ENCODE measurements at regions of chr9 and their contacts with region 1.

Region 1: DNA sequence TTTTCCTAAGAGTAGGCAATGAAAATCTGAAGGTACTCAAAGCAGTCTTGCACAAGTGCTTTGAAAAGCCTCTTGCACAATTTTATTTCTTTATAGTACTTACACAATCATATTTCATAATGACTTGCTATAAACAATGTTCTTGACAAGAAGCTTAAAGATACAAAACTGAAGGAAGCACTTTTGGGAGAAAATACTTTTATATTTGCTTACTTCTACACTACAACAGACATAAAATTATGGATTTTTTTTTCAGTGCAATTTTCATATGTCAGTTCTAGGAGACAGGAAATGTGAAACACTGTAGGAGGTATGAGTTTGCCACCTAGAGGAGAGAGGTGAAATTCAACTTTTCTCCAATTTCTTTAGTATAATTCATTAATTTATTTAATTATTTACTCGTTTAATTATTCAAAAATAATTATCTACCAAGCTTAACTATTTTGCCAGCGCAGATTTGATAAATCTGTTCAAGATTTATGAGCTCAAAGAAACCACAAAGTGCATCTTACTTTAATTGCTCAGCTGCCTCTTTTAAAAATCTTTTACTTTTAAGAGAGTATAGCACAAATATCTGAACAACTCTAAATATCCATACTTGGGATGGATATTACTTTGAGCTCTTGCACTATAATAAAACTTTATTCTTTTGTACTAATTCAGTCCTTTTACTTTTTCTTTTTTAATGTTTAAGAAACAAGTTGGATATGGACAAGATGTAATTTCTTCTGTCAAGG is 29.0 kb upstream of the CDKN2B start:
- DNase-seq: peak in 5 of 9 donors; percentile 7 to 39 (median 18)
- ATAC-seq: peak; percentile 63
- H3K4me3 ChIP-seq: no peak overlapping the region
- H3K4me3 Mint-ChIP-seq: no peak overlapping the region
- H3K27ac ChIP-seq: no peak overlapping the region
- H3K27ac Mint-ChIP-seq: no peak overlapping the region
- H3K4me1 ChIP-seq: peaks cover 0 to 5% of the 10 kb centered on the region in 2 donors
- H3K4me1 Mint-ChIP-seq: peaks cover 0 to 42% (median 4%) of the 10 kb centered on the region in 7 donors
- H3K27me3 ChIP-seq: no peaks in the 10 kb centered on the region
- H3K27me3 Mint-ChIP-seq: peaks cover 0 to 42% (median 0%) of the 10 kb centered on the region in 5 donors

Region 2: DNA sequence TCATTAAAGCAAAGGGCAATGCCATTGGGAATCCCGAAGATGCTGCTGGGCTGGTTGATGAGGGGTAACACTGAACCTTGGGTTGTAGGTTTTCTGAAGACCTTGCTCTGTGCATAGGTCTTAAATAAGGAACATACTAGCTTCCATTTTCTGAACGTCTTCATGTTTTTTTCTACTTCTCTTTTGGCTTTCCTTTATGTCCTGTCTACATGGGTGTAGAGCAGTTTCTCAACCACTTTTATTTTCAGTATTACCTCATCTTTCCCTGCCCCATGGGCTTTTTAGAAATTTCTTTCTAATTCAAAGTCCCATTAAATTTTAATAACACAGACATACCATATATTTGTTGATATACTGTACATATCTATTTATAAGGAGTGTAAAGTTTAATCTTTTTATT is 798.2 kb before region 1 on chr9 and contains the start of gene IFNA14:
- CTCF ChIA-PET with region 1: no interaction called
- POLR2A ChIA-PET with region 1: no interaction called
- intact Hi-C with region 1: loop called in 1 of 2 experiments (anchors 10 kb)
- DNase-seq: no peak
- ATAC-seq: no peak
- H3K4me3 ChIP-seq: no peak within 1 kb of the TSS
- H3K4me3 Mint-ChIP-seq: no peak within 1 kb of the TSS
- H3K27ac ChIP-seq: no peak within 1 kb of the TSS
- H3K27ac Mint-ChIP-seq: no peak within 1 kb of the TSS
- H3K4me1 ChIP-seq: peaks cover 0 to 5% of the 10 kb centered on the region in 2 donors
- H3K4me1 Mint-ChIP-seq: peaks cover 6 to 19% (median 12%) of the 10 kb centered on the region in 7 donors
- H3K27me3 ChIP-seq: peaks cover 0 to 2% of the 10 kb centered on the region in 2 donors
- H3K27me3 Mint-ChIP-seq: peaks cover 14 to 53% (median 15%) of the 10 kb centered on the region in 5 donors
- total RNA-seq, gene IFNA14: not detected

Region 3: DNA sequence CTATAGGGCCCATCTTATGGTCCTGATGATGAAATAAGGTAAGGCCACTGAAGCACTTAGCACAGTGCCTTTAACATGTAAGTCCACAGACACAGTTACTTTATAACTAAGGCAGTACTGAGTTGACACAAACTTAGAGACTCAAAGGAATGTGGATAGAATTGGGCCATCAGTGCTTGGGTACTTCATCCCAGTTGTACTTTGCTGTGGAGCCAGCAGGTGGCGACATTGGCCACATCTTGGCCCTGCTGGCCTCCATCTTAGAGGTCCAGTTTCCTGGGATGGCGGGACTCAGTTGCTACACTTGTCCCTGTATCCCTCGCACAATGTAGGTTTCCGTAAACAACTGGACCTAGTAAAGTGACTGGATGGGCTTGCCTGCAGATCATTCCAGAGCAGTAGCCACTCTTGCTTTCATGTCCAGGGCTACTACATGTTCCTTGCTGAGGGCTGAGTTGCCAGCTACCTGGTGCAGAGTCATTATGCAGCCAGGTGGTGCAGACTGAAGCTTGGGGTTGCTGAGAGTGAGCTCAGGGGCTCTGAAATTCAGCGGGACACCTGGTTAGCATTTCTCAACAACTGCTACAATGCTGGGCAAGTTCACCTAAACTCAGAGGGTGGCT is 225.1 kb before region 1 on chr9:
- CTCF ChIA-PET with region 1: interaction called, 108 read pairs
- POLR2A ChIA-PET with region 1: no interaction called
- intact Hi-C with region 1: loop called (anchors 1 kb)
- DNase-seq: peak; percentile 11 to 69 (median 50)
- ATAC-seq: peak; percentile 82
- H3K4me3 ChIP-seq: no peak overlapping the region
- H3K4me3 Mint-ChIP-seq: no peak overlapping the region
- H3K27ac ChIP-seq: no peak overlapping the region
- H3K27ac Mint-ChIP-seq: peak overlapping the region in 4 of 9 donors; percentile 6 to 81 (median 64)
- H3K4me1 ChIP-seq: peaks cover 7 to 12% of the 10 kb centered on the region in 2 donors
- H3K4me1 Mint-ChIP-seq: peaks cover 6 to 40% (median 17%) of the 10 kb centered on the region in 7 donors
- H3K27me3 ChIP-seq: no peaks in the 10 kb centered on the region
- H3K27me3 Mint-ChIP-seq: no peaks in the 10 kb centered on the region

Region 4: GRCh38 chr9:22026696-22027095 is 11.4 kb before region 1 on chr9:
- CTCF ChIA-PET with region 1: interaction called, 10 read pairs
- POLR2A ChIA-PET with region 1: no interaction called
- intact Hi-C with region 1: no loop called
- DNase-seq: no peak
- ATAC-seq: no peak
- H3K4me3 ChIP-seq: no peak overlapping the region
- H3K4me3 Mint-ChIP-seq: no peak overlapping the region
- H3K27ac ChIP-seq: no peak overlapping the region
- H3K27ac Mint-ChIP-seq: no peak overlapping the region
- H3K4me1 ChIP-seq: no peaks in the 10 kb centered on the region
- H3K4me1 Mint-ChIP-seq: peaks cover 0 to 8% (median 0%) of the 10 kb centered on the region in 7 donors
- H3K27me3 ChIP-seq: peaks cover 0 to 3% of the 10 kb centered on the region in 2 donors
- H3K27me3 Mint-ChIP-seq: peaks cover 9 to 64% (median 22%) of the 10 kb centered on the region in 5 donors

Region 5: DNA sequence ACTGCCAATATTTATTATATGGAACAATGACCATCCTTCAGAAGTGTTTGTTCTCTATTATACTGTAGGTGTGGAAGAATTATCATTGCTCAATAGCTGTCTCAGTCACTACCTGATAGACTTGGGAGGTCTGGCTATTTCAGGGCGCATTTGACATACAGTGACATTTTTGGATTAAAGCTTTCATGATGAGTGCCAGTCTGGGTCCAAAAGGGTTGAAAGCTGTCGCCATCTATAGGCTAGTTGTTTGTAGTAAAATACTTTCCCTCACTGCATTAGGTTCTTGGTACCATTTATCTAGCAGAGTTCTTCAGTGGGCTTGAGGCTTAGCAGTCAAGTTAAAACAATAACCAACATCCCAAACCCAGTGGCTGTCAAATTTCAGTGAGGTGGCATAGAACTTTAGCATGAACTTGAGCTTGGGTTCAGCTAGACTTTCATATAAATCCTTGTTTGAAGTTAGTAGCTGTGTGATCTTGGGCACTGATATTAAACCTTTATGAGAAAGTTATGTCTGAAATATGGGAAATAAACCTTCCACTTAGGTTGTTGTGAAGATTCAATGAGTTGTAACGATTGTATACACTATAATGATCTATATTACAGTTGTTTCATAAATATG is 81.5 kb after region 1 on chr9:
- CTCF ChIA-PET with region 1: no interaction called
- POLR2A ChIA-PET with region 1: no interaction called
- intact Hi-C with region 1: loop called (anchors 1 to 5 kb)
- DNase-seq: peak in 3 of 9 donors; percentile 4 to 28 (median 27)
- ATAC-seq: peak; percentile 70
- H3K4me3 ChIP-seq: no peak overlapping the region
- H3K4me3 Mint-ChIP-seq: no peak overlapping the region
- H3K27ac ChIP-seq: no peak overlapping the region
- H3K27ac Mint-ChIP-seq: no peak overlapping the region
- H3K4me1 ChIP-seq: no peaks in the 10 kb centered on the region
- H3K4me1 Mint-ChIP-seq: peaks cover 0 to 20% (median 0%) of the 10 kb centered on the region in 7 donors
- H3K27me3 ChIP-seq: no peaks in the 10 kb centered on the region
- H3K27me3 Mint-ChIP-seq: peaks cover 5 to 71% (median 10%) of the 10 kb centered on the region in 5 donors

Region 6: GRCh38 chr9:22452415-22453010 is 414.4 kb after region 1 on chr9:
- CTCF ChIA-PET with region 1: interaction called, 3 read pairs
- POLR2A ChIA-PET with region 1: no interaction called
- intact Hi-C with region 1: loop called (anchors 5 to 10 kb)
- DNase-seq: peak in 5 of 9 donors; percentile 8 to 31 (median 11)
- ATAC-seq: peak; percentile 70
- H3K4me3 ChIP-seq: no peak overlapping the region
- H3K4me3 Mint-ChIP-seq: no peak overlapping the region
- H3K27ac ChIP-seq: no peak overlapping the region
- H3K27ac Mint-ChIP-seq: no peak overlapping the region
- H3K4me1 ChIP-seq: no peaks in the 10 kb centered on the region
- H3K4me1 Mint-ChIP-seq: peaks cover 0 to 5% (median 2%) of the 10 kb centered on the region in 7 donors
- H3K27me3 ChIP-seq: peaks cover 6 to 10% of the 10 kb centered on the region in 2 donors
- H3K27me3 Mint-ChIP-seq: peaks cover 28 to 65% (median 37%) of the 10 kb centered on the region in 5 donors